CD4-positive, alpha-beta memory T cell (primary cell): ENCODE measurements at regions of chr15 and their contacts with region 1.

Region 1: DNA sequence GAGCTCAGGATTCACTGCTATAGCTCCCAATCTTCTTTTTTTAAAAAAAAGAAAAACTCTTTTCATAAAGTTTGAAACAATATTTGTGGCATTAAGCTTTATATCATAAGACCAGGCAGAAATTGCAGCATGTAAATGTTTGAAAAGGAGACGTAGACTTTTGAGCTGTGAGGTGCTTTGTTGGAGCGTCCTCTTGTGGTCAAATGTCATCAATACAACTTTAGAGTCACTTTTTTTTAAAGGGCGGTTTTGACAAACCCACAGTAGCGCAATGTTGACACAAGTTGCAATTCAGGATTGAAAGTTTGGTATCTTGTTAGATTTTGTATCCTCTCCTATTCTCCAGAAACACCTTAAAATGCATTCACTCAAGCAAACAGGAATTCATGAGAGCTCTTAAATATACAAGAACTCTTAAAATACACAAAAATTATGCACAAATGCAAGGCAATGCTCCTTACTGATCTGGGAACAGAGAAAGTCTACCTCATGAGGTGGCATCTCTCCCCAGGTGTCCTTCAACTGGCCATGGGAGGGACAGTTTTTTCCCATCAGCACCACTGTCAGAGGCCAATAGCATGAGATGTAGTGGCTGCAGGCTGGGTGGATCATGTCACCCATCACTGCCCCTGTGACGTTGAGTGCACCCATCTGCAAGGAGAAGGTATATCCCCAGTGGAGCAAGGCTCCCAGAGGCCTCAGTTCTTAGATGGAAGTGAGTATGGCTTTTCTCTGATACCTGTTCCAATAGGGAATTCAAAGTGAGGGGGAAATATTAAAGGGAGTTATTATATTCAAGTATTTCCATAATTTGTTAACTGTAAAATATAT is 70.7 kb downstream of the ANXA2 start:
- DNase-seq: peak in 4 of 5 donors; percentile 55 to 58 (median 57)
- H3K4me3 ChIP-seq: no peak overlapping the region
- H3K4me3 Mint-ChIP-seq: no peak overlapping the region
- H3K27ac ChIP-seq: no peak overlapping the region
- H3K27ac Mint-ChIP-seq: no peak overlapping the region
- H3K4me1 ChIP-seq: no peaks in the 10 kb centered on the region
- H3K4me1 Mint-ChIP-seq: peaks cover 2 to 7% (median 6%) of the 10 kb centered on the region in 4 donors
- H3K27me3 ChIP-seq: peaks cover 23% of the 10 kb centered on the region
- H3K27me3 Mint-ChIP-seq: peaks cover 18 to 27% of the 10 kb centered on the region in 2 donors

Region 2: DNA sequence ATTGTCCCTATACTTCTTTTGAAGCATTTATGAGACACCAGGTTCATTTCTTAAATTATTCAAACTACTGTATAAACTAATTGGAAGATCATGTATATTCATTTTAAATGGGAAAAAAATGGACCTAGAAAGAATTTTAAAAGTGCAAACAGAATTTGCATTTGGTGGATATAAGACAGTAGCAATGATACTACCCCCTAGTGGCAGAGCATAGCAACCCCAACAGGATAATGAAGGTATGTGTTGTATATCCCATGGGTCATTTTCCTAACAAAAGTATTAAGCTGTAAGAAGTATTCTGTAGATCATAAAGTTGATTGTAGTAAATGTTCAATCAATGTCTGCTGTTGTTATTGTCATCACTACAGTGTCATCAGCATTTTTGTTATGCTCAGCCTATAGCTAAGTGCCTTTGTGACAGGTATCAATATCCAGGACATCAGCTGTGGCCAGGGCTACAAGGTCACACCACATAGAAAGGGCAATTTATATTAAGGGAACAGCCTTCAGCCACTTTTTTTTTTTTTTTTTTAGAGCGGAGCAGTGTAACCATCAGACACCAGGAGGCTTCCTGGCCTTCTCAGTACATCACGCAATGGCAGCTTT is 147.2 kb before region 1 on chr15:
- CTCF ChIA-PET with region 1: interaction called, 4 read pairs
- POLR2A ChIA-PET with region 1: no interaction called
- intact Hi-C with region 1: loop called (anchors 2 kb)
- DNase-seq: peak; percentile 35 to 51 (median 45)
- H3K4me3 ChIP-seq: no peak overlapping the region
- H3K4me3 Mint-ChIP-seq: no peak overlapping the region
- H3K27ac ChIP-seq: no peak overlapping the region
- H3K27ac Mint-ChIP-seq: no peak overlapping the region
- H3K4me1 ChIP-seq: no peaks in the 10 kb centered on the region
- H3K4me1 Mint-ChIP-seq: no peaks in the 10 kb centered on the region
- H3K27me3 ChIP-seq: no peaks in the 10 kb centered on the region
- H3K27me3 Mint-ChIP-seq: peaks cover 8 to 18% of the 10 kb centered on the region in 2 donors

Region 3: DNA sequence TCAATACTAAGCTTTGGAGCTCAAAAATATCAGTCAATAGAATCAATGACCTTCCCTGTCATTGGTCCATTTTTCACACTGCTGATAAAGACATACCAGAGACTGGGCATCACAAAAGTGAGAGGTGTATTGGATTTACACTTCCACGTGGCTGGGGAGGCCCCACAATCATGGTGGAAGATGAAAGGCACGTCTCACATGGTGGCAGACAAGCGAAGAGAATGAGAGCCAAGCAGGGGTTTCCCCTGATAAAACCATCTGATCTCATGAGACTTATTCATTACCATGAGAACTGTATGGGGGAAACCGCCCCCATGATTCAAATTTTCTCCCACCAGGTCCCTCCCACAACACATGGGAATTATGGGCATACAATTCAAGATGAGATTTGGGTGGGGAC is 11.2 kb before region 1 on chr15:
- CTCF ChIA-PET with region 1: interaction called, 15 read pairs
- POLR2A ChIA-PET with region 1: no interaction called
- intact Hi-C with region 1: no loop called
- DNase-seq: no peak
- H3K4me3 ChIP-seq: no peak overlapping the region
- H3K4me3 Mint-ChIP-seq: no peak overlapping the region
- H3K27ac ChIP-seq: no peak overlapping the region
- H3K27ac Mint-ChIP-seq: no peak overlapping the region
- H3K4me1 ChIP-seq: no peaks in the 10 kb centered on the region
- H3K4me1 Mint-ChIP-seq: no peaks in the 10 kb centered on the region
- H3K27me3 ChIP-seq: no peaks in the 10 kb centered on the region
- H3K27me3 Mint-ChIP-seq: peaks cover 6 to 10% of the 10 kb centered on the region in 2 donors

Region 4: DNA sequence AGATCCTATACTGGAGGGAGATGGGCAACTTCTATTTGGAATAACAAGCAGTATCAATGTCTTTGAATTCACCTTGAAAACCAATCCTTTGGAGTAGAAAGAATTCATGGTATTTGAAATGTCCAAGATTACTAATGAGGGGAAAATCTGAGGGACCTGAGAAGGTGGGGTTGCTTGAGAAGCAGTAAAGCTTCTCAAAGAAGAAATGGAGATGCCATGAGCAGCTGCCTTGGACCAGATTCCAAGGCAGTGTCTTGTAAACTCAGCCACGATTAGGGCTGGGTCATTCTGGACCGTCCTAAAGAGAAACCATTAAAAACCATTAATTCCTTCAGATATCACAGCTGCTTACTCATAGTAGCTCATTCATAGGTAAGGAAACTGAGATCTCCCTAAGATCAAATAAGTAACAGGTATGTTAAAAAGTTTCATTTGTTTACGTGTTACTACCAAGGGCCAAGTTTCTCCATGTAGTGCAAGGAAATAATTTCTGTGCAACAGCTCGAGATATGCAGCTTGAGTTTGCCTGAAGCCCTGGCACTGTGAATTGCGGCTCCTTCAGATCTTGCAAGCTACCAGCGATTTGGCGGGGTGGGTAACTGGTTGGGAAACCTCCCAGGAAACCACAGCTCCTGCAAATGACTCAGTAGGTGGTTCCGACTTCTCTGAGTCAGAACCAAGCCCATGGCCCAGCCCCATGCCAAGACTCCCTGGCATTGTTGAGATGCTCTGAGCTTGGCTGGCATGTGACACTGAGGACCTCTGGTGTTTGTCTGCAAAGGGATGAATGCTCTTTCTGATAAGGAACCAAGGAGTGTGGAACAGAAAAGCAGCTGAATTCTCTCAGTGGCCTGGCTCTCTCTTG is 605.2 kb after region 1 on chr15:
- CTCF ChIA-PET with region 1: interaction called, 4 read pairs
- POLR2A ChIA-PET with region 1: no interaction called
- intact Hi-C with region 1: loop called (anchors 2 kb)
- DNase-seq: peak; percentile 52 to 86 (median 61)
- H3K4me3 ChIP-seq: no peak overlapping the region
- H3K4me3 Mint-ChIP-seq: peak overlapping the region in 6 of 8 donors; percentile 5 to 65 (median 31)
- H3K27ac ChIP-seq: no peak overlapping the region
- H3K27ac Mint-ChIP-seq: peak overlapping the region in 4 of 7 donors; percentile 8 to 57 (median 55)
- H3K4me1 ChIP-seq: peaks cover 14% of the 10 kb centered on the region
- H3K4me1 Mint-ChIP-seq: peaks cover 9 to 25% (median 14%) of the 10 kb centered on the region in 4 donors
- H3K27me3 ChIP-seq: no peaks in the 10 kb centered on the region
- H3K27me3 Mint-ChIP-seq: no peaks in the 10 kb centered on the region